ENCODE measurements at regions of chr1 and their contacts with region 1.

Region 1: DNA sequence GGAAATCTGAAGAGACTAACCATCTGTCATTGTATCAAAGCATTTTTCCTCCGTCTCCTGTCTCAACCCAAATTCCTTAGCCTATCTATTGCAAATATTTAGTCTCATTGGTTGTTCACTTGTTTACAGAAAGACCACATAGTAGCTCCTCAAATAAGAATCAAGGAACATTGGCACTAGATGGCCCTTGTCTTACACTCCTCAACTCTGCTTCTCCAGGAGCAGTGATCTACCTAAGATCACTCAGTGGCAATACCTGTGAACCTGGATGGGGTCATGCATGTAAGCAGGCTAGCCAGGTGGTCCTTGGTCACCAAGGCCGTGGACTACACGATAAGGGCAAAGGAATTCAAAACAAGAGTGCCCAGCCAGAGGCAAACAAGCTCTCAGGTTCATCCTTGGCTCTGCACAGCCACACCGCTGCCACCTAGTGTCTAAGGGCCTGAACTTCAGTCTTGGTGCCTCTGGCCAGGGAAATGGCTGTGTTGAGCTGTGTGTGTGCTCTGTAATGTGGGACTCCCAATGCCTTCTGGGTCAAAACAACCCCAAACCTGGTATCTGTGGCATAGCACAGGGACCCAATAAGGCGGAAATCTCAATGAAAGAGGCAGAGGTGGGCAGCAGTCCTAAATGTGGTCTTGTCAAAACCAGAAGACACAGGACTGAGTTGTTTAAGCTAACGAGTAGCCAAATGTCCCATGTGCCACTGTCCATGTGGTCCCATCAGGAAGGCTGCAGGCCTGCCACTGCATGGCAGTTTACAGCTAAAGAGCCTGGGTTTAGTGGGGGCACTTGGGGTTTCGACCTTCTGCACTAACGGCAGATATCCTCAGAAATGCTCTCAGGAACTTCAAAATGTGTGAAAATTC is 54.5 kb downstream of the GPR161 start:
- DNase-seq: peak; percentile 38
- H3K4me3 ChIP-seq: no peak overlapping the region
- CTCF ChIP-seq: peak; percentile 96

Region 2: DNA sequence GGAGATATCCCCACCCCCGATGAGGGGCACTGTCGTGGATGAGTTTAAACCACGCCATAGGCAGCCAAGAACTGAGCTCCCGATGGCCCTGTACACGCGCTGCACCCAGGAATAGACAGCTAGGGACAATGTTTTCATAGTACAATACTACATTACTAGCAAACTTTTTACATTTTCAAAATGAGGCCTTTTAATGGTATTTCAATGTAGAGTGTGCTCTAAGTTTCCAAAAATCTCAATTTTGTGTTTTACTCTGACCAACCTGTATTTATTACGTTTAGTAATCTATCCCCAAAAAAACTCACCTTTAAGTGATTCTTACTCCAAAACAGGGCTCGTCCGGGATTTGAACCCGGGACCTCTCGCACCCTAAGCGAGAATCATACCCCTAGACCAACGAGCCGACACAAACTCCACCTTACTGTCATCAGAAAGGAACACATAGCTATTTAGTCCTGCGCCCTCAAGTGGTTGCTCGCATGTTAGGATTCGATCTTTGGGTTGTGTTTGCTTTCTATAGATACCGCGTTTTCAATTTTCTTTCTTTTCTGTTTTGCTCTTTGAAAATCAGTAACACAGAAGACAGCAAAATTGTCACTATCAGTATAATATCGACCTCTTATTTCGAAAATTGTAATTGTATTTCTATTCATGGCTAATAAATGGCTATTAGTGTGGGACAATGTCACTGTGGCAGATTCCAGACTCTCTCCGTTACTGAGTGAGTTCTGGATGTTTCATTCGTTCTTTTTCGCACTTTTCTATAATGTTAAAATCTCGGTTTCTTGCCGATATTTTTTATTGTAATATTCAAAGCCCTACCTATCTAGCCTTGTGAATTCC is 366.9 kb before region 1 on chr1:
- CTCF ChIA-PET with region 1: interaction called, 26 read pairs
- POLR2A ChIA-PET with region 1: no interaction called
- DNase-seq: peak; percentile 44
- H3K4me3 ChIP-seq: peak overlapping the region; percentile 99
- CTCF ChIP-seq: peak; percentile 85

Region 3: GRCh38 chr1:167936068-167936929 is 145.9 kb before region 1 on chr1 and contains the start of gene DCAF6:
- CTCF ChIA-PET with region 1: interaction called, 14 read pairs
- POLR2A ChIA-PET with region 1: interaction called, 3 read pairs
- DNase-seq: peak; percentile 91
- H3K4me3 ChIP-seq: peak within 1 kb of the TSS; percentile 87
- CTCF ChIP-seq: no peak

Region 4: GRCh38 chr1:168092566-168093355 is 10.5 kb after region 1 on chr1:
- CTCF ChIA-PET with region 1: interaction called, 237 read pairs
- POLR2A ChIA-PET with region 1: no interaction called
- DNase-seq: no peak
- H3K4me3 ChIP-seq: no peak overlapping the region
- CTCF ChIP-seq: peak; percentile 37

Region 5: DNA sequence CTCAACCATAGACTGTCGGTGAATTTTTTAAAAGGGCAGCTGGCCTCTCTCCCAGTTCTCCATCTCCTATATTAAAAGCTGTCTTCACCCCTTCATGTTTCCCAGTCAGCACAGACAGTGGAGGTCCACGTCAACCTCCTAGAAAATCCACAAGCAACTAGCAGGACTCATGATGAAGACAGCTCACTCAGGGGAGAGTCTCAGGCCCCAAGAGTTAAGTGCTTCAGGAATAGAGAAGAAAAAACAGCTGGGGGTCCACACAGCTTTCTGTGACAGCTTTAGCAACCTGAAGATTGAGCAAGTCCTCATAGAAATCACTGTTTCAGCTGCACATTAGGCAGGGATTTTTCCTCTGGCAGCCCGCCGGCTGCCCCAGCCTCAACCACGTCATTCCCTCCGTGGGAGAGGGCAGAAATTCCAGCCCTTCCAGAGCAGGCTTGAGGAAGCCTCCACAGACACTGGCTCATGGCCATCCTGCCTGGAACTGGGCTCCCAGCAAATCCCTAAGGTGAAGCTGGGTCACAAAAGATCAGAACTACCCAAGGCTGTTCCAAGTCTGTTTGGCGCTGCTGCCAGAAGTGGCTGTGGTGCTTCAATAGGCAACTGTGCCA is 39.3 kb after region 1 on chr1:
- CTCF ChIA-PET with region 1: interaction called, 12 read pairs
- POLR2A ChIA-PET with region 1: no interaction called
- DNase-seq: peak; percentile 75
- H3K4me3 ChIP-seq: no peak overlapping the region
- CTCF ChIP-seq: no peak

Region 6: DNA sequence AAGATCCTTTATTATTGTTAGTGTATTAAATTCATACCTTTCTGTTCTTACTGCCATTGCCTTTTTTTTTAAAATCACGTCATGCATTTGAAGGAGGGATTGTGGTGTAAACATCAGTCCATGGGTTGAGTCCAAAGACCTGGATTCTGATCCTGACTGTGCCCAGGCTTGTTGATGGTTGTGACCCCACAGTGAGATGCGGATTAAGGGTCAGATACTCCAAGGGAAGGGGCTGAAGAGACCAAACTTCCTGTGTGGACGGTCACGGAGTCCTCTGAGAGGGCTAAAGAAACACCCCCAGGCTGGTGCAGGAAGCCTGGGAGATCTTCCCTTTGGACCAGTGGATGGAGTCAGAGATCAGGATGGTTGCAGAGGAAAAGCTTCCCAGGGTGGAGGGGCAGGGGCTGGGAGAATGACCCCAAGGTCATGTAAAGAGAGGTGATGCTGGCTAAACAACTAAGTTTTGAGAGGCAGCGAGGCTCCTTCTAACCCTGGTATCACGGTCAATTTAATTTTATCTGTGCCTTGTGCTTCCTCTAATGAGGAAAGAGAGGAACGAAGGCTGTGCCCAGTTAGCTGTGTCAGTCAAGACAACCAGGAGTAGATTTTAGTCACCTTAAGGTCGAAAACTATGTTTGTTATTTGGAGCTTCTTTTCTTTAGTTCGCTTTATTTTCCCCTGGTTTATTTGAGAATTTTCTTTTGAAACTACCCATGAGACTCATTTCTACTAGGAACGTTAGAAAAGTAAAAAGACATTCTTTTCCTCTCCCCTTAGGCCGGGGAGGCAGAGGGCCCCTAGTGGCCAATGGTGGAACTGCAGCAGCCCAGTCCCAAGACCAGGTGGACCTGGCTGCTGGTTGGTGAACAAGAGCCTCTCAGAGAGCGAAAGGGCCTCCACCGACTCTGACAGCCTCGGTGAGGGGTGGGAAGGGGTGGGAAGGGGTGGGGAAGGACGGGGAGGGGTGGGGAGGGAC is 63.2 kb after region 1 on chr1:
- CTCF ChIA-PET with region 1: interaction called, 34 read pairs
- POLR2A ChIA-PET with region 1: no interaction called
- DNase-seq: no peak
- H3K4me3 ChIP-seq: no peak overlapping the region
- CTCF ChIP-seq: peak; percentile 99

Measured in AG04449 (cell line).